ENCODE measurements at regions of chr18 and their contacts with region 1.

Region 1: DNA sequence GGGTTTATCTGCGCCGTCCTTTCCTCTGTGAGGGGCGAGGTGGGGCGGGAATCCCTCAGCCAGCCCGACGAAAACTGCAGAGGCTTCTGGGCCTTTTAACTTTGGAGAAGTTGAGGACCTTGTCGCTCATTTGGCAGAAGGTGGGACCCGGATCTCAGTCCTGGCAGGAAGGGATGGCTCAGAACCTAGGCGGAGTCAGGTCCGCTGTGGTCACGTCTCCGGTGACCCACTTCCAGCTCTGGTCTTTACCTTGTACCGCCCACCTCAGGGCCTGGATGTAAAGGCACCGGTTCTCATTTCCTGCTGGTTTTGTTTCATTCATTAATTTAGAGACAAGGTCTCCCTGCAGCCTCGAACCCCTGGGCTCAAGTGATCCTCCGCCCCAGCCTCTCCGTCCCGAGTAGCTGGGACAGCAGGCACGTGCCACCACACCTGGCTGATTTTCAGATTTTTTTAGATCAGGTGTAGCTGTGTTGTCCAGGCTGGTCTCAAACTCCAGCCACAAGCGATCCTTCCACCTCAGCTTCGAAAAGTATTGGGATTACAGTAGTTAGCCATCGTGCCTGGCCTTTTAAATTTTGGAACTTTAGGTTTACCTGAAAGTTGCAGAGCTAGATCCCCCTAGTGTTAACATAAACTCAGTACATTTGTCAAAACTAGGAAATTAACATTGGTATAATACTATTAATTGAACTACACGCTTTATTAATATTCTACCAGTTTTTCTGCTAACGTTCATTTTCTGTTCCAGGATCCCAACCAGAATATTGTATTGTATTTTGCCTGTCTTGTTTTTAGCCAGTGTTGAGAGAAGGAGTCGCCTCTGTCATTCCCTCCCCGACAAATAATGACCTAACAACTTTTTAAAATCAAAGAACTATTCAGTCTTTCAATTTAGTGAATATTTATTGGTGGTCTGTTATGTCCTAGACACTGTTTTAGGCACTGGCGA is 852 bp downstream of the POLI start:
- DNase-seq: no peak
- ATAC-seq: peak; percentile 69
- H3K4me3 ChIP-seq: peak overlapping the region; percentile 53 to 57
- H3K27ac ChIP-seq: peak overlapping the region in 1 of 2 donors; percentile 50
- H3K4me1 ChIP-seq: no peaks in the 10 kb centered on the region
- H3K27me3 ChIP-seq: no peaks in the 10 kb centered on the region

Region 2: DNA sequence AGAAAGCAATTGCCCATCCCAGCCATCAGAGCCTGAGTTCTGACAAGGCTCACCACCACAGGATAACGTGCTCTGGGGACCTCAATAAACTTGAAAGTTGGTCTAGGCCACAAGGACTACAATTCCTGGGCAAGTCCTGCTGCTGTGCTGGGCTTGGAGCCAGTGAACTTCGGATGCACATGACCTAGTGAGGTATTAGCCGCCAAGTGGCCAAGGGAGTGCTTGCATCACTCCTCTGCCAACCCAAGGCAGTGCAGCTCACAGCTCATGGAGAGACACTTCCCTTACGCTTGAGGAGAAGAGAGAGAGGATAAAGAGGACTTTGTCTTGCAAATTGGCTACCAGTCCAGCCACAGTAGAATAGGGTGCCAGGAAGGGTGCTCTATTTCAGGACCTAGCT is 265.3 kb before region 1 on chr18:
- intact Hi-C with region 1: no loop called
- DNase-seq: no peak
- ATAC-seq: no peak
- H3K4me3 ChIP-seq: no peak overlapping the region
- H3K27ac ChIP-seq: no peak overlapping the region
- H3K4me1 ChIP-seq: no peaks in the 10 kb centered on the region
- H3K27me3 ChIP-seq: no peaks in the 10 kb centered on the region

Region 3: DNA sequence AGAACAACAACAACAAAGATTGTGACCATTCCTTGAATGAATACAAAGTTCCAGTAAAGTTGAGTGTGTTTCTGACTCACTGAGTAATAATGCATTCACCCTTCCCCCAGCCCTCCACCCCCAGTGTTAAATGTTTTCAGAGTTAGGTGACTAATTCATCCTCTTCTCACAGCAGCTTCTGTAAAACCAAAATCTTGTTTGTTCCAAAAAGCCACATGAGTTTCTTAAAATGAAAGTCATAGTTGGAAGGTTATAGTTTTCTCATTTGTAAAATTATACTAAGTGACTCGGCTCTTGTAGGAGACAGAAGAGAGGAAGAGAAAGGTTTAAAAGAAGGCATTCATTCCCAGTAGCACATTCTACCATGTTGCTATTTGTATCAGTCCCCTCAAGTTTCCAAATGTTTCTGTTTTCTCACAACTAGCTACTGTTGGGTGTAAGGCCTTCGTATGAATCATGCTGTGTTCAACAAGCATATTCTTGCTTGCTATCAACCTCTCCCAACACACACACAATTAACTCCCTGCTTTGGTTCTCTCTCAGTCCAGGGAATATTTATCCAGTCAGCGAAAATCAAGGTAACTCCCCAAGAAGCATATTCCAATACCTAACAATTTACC is 121.0 kb before region 1 on chr18:
- intact Hi-C with region 1: loop called in 1 of 2 experiments (anchors 10 kb)
- DNase-seq: peak in 1 of 2 donors; percentile 65
- ATAC-seq: no peak
- H3K4me3 ChIP-seq: no peak overlapping the region
- H3K27ac ChIP-seq: peak overlapping the region; percentile 12 to 74
- H3K4me1 ChIP-seq: peaks cover 2 to 8% of the 10 kb centered on the region in 2 donors
- H3K27me3 ChIP-seq: no peaks in the 10 kb centered on the region

Region 4: GRCh38 chr18:54162431-54162830 is 107.7 kb before region 1 on chr18:
- intact Hi-C with region 1: loop called in 1 of 2 experiments (anchors 10 kb)
- DNase-seq: no peak
- ATAC-seq: no peak
- H3K4me3 ChIP-seq: no peak overlapping the region
- H3K27ac ChIP-seq: no peak overlapping the region
- H3K4me1 ChIP-seq: peaks cover 1 to 2% of the 10 kb centered on the region in 2 donors
- H3K27me3 ChIP-seq: no peaks in the 10 kb centered on the region

Region 5: DNA sequence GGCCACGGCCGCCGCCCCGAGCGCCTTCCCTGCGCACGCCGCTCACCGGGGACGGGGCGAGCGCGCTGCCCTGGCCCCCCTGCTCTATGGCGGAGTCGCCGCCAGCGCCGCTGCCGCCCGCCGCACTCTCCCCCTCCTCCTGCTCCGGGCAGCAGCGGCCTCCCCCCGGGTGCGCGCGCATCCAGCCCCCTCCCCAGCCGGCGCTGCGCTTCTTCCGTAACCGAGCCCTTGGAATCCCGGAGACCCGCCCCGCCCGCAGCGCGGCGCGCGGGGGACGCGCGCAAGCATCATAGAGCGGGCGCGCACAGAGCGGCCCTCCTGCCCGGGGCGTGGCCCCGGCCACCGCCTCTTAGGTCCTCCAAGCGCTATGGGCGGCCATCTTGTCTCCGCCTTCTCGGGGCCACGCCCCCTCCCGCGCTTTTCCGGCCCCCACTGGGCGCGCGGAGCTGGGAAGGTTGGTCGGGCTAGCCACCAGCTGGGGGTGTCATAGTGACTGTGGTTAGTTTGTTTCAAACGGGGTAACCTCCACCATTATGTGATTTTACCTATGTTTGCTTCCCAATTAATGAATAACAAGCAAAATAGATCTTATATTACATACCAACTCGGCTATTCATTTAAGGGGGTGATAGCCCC is 45.7 kb before region 1 on chr18 and contains the start of gene MBD2:
- intact Hi-C with region 1: loop called (anchors 1 to 5 kb)
- DNase-seq: peak; percentile 96 to 98
- ATAC-seq: peak; percentile 99
- H3K4me3 ChIP-seq: peak within 1 kb of the TSS; percentile 96 to 99
- H3K27ac ChIP-seq: peak within 1 kb of the TSS; percentile 10 to 71
- H3K4me1 ChIP-seq: no peaks in the 10 kb centered on the region
- H3K27me3 ChIP-seq: no peaks in the 10 kb centered on the region
- total RNA-seq, gene MBD2: 74.3 to 92.6 TPM

Region 6: GRCh38 chr18:54251606-54252407 is 18.4 kb before region 1 on chr18:
- intact Hi-C with region 1: loop called in 1 of 2 experiments (anchors 2 kb)
- DNase-seq: no peak
- ATAC-seq: peak; percentile 52
- H3K4me3 ChIP-seq: no peak overlapping the region
- H3K27ac ChIP-seq: peak overlapping the region; percentile 19 to 57
- H3K4me1 ChIP-seq: peaks cover 6 to 8% of the 10 kb centered on the region in 2 donors
- H3K27me3 ChIP-seq: no peaks in the 10 kb centered on the region